ENCODE measurements at regions of chr11 and their contacts with region 1.

Region 1: DNA sequence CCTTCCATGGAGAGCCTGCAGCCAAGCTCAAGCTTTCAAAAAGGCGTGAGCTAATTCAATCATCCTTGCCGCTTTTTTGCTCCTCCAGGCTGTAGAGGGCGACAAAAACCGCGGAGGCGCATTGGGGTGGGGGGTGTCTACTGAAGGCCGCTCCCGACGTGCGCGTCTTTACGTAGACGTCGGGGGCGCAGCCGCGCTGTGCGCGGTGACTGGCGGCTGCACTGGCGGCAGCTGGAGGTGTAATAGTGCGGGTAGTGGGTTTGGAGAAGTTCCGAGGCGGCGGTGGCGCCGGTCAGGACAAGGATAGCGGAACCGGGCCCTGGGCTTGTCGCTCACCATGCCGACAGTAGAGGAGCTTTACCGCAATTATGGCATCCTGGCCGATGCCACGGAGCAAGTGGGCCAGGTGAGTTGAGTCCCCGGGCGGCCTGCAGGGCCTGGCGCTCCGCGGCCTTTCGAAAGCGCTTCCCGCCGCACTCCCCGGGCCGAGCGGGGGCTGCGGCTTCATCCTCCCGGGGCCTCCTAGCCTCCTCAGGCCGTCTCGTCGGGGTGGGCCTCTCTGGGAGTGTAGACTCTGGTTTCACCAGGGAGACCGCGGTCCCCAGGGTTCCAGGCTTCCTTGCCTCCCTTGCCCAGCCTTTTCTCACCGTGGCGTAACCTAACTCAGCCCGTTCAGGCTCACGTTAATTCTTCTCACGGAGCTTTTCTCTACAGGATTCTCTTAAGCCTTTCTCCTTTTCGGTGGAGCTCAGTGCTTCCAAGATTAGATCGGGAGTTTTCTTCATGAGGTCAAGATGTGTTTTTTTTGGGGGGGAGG is at the start of gene API5:
- DNase-seq: peak; percentile 85 to 96 (median 90)
- ATAC-seq: peak; percentile 93
- H3K4me3 ChIP-seq: peak within 1 kb of the TSS; percentile 86
- H3K4me3 Mint-ChIP-seq: peak within 1 kb of the TSS; percentile 93
- H3K27ac ChIP-seq: peak within 1 kb of the TSS; percentile 45 to 71
- H3K27ac Mint-ChIP-seq: peak within 1 kb of the TSS; percentile 88
- H3K4me1 ChIP-seq: peaks cover 24% of the 10 kb centered on the region
- H3K4me1 Mint-ChIP-seq: peaks cover 55% of the 10 kb centered on the region
- H3K27me3 ChIP-seq: no peaks in the 10 kb centered on the region
- H3K27me3 Mint-ChIP-seq: no peaks in the 10 kb centered on the region
- CTCF ChIP-seq: peak; percentile 92
- total RNA-seq, gene API5: 67.8 to 70.3 TPM

Region 2: DNA sequence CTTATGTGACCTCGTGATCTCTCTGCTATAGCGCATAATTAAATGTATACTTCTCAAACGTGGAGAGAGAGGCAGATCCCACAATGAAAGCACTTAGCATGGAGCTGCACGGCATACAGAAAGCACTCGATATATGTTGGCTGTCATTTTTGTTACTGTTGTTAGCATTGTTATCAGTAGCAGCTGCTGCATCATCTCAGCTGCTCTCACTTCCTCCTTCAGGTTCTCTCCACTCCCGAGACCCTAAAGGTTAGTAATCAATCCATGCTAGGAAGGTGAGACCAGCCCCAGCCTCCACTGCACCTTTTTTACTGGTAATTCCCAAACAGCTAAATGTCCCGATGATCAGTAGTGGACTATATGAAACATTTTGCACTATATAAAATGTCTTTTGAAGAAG is 13.6 kb before region 1 on chr11:
- CTCF ChIA-PET with region 1: interaction called, 13 read pairs
- POLR2A ChIA-PET with region 1: no interaction called
- intact Hi-C with region 1: no loop called
- DNase-seq: no peak
- ATAC-seq: no peak
- H3K4me3 ChIP-seq: no peak overlapping the region
- H3K4me3 Mint-ChIP-seq: no peak overlapping the region
- H3K27ac ChIP-seq: no peak overlapping the region
- H3K27ac Mint-ChIP-seq: no peak overlapping the region
- H3K4me1 ChIP-seq: no peaks in the 10 kb centered on the region
- H3K4me1 Mint-ChIP-seq: no peaks in the 10 kb centered on the region
- H3K27me3 ChIP-seq: peaks cover 4 to 5% of the 10 kb centered on the region in 2 experiments
- H3K27me3 Mint-ChIP-seq: peaks cover 51% of the 10 kb centered on the region
- CTCF ChIP-seq: no peak

Region 3: DNA sequence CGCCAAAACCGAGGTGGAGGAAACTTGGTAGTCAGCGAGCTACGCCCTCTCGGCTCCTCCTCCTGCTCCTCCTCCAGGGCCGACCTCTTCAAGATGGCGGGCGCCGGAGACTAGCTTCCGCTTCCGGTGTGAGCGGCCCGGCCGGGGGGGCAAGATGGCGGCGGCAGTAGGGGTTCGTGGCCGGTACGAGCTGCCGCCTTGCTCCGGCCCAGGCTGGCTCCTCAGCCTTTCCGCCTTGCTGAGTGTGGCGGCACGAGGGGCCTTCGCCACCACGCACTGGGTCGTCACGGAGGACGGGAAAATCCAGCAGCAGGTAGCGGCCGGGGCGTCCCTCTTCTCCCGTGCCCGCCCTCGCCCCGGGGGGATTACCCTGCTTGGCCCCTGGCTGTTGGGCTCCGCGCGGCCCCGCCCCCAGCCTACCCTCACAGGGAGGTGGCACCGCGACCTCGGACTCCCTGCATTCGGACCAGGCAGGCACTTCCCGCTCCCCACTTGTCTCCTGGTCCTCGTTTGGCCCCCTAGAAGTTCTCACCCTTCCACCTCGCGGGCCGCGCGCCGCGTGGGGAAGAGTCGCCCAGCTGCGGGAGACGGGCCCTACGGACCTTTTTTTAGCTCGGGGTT is 46.9 kb after region 1 on chr11 and contains the start of gene TTC17:
- CTCF ChIA-PET with region 1: interaction called, 46 read pairs
- POLR2A ChIA-PET with region 1: interaction called, 90 read pairs
- intact Hi-C with region 1: loop called (anchors 2 kb)
- DNase-seq: peak; percentile 86 to 95 (median 90)
- ATAC-seq: peak; percentile 97
- H3K4me3 ChIP-seq: peak within 1 kb of the TSS; percentile 95
- H3K4me3 Mint-ChIP-seq: peak within 1 kb of the TSS; percentile 98
- H3K27ac ChIP-seq: peak within 1 kb of the TSS; percentile 83 to 95
- H3K27ac Mint-ChIP-seq: peak within 1 kb of the TSS; percentile 94
- H3K4me1 ChIP-seq: peaks cover 24% of the 10 kb centered on the region
- H3K4me1 Mint-ChIP-seq: peaks cover 61% of the 10 kb centered on the region
- H3K27me3 ChIP-seq: no peaks in the 10 kb centered on the region
- H3K27me3 Mint-ChIP-seq: no peaks in the 10 kb centered on the region
- CTCF ChIP-seq: no peak
- total RNA-seq, gene TTC17: 72.9 to 77.3 TPM

Region 4: GRCh38 chr11:43643898-43644620 is 332.1 kb after region 1 on chr11:
- CTCF ChIA-PET with region 1: no interaction called
- POLR2A ChIA-PET with region 1: no interaction called
- intact Hi-C with region 1: loop called in 1 of 2 experiments (anchors 2 kb)
- DNase-seq: peak; percentile 73 to 91 (median 80)
- ATAC-seq: peak; percentile 99
- H3K4me3 ChIP-seq: peak overlapping the region; percentile 85
- H3K4me3 Mint-ChIP-seq: peak overlapping the region; percentile 91
- H3K27ac ChIP-seq: peak overlapping the region in 1 of 2 donors; percentile 23
- H3K27ac Mint-ChIP-seq: peak overlapping the region; percentile 82
- H3K4me1 ChIP-seq: peaks cover 9% of the 10 kb centered on the region
- H3K4me1 Mint-ChIP-seq: peaks cover 22% of the 10 kb centered on the region
- H3K27me3 ChIP-seq: peaks cover 10 to 13% of the 10 kb centered on the region in 2 experiments
- H3K27me3 Mint-ChIP-seq: peaks cover 18% of the 10 kb centered on the region
- CTCF ChIP-seq: no peak

Region 5: DNA sequence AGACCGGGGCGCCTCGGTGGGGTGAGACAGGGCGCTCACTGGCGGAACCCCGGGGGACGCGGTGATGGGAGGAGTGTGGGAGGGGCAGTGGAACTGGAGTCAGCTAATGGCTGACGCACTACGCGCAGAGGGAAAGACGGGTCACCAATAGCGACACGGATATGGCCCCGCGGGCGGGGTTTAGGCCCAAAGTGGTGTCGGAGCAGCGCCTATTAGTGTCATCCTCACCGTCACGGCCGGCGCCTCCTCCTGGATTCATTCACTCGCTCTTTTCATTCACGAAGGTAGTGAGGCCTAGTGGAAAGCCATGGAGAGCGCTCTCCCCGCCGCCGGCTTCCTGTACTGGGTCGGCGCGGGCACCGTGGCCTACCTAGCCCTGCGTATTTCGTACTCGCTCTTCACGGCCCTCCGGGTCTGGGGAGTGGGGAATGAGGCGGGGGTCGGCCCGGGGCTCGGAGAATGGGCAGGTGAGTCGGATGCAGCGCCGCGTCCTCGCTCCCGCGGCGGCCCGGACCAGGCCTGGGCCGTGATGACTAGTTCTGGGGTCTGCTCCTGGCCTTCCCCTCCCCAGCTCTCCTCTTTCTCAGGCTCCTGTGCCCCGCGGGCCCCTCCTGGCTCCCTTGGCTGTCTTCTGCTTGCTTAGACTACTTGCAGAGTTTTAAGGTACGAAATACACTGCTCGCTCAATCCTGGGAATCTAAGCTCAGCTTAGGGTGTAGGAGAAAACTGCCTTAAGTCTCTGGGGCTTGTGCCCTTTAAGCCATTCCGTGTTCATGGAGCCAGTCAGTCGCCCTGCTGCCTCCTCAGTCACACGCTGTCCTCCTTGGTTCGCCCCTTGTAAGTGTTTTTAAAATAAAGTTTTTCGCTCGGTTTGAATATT is 368.8 kb after region 1 on chr11 and contains the start of gene HSD17B12:
- CTCF ChIA-PET with region 1: no interaction called
- POLR2A ChIA-PET with region 1: interaction called, 10 read pairs
- intact Hi-C with region 1: loop called (anchors 2 to 5 kb)
- DNase-seq: peak; percentile 95 to 99 (median 98)
- ATAC-seq: peak; percentile 92
- H3K4me3 ChIP-seq: peak within 1 kb of the TSS; percentile 91
- H3K4me3 Mint-ChIP-seq: peak within 1 kb of the TSS; percentile 96
- H3K27ac ChIP-seq: peak within 1 kb of the TSS; percentile 67 to 93
- H3K27ac Mint-ChIP-seq: peak within 1 kb of the TSS; percentile 96
- H3K4me1 ChIP-seq: peaks cover 18% of the 10 kb centered on the region
- H3K4me1 Mint-ChIP-seq: peaks cover 48% of the 10 kb centered on the region
- H3K27me3 ChIP-seq: no peaks in the 10 kb centered on the region
- H3K27me3 Mint-ChIP-seq: no peaks in the 10 kb centered on the region
- CTCF ChIP-seq: no peak
- total RNA-seq, gene HSD17B12: 16.1 to 16.3 TPM

Region 6: DNA sequence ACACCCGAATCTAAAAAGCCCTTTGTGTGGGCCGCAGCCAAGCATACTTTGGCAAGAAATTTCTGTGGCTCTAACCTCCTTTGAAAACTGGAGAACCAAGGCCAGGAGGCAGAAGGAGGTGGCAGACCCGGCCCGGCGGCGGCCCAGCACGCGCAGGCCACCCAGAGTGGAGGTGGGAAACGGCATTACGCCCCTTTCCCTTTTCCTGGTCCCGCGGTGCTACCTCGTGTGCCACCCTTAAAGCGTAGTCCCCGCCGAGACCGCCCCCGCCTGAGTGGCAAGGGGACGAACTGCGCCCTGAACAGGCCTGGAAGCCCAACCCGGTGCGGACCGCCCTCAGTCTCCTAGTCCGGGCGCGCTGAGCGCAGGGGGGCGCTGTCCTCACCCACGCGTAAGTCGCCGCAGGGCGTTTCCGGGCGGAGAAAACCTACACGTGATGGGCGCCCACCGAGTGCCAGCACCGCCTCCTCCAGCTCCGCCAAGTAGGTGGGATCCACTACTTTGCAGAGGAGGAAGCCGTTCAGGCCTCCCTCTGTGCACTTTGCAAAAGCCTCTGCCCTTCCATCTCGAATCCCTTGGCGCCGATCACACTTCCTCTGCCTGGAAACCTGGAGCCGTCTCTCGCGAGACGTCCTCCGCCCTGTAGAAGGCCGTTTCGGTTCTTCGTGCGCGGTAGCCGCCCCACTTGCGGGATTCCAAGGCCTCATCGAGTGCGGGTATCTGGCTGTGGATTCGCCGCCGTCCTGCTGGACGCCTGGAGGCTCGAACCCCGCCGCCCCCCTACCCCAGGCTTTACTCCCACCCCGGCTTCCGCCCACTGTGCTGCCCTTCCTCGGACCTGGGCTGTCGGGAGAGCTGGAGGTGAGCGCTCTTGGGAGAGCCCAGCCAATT is 754.1 kb after region 1 on chr11 and contains the start of gene ACCS:
- CTCF ChIA-PET with region 1: no interaction called
- POLR2A ChIA-PET with region 1: no interaction called
- intact Hi-C with region 1: loop called in 1 of 2 experiments (anchors 5 kb)
- DNase-seq: peak; percentile 75 to 96 (median 86)
- ATAC-seq: peak; percentile 95
- H3K4me3 ChIP-seq: peak within 1 kb of the TSS; percentile 90
- H3K4me3 Mint-ChIP-seq: peak within 1 kb of the TSS; percentile 89
- H3K27ac ChIP-seq: peak within 1 kb of the TSS; percentile 59 to 65
- H3K27ac Mint-ChIP-seq: peak within 1 kb of the TSS; percentile 88
- H3K4me1 ChIP-seq: peaks cover 20% of the 10 kb centered on the region
- H3K4me1 Mint-ChIP-seq: peaks cover 30% of the 10 kb centered on the region
- H3K27me3 ChIP-seq: no peaks in the 10 kb centered on the region
- H3K27me3 Mint-ChIP-seq: no peaks in the 10 kb centered on the region
- CTCF ChIP-seq: peak; percentile 90
- total RNA-seq, gene ACCS: 17.7 to 18.7 TPM

Measured in CD4-positive, alpha-beta T cell (primary cell).